GM10248 (cell line): ENCODE measurements at regions of chr6 and their contacts with region 1.

Region 1: GRCh38 chr6:70901326-70901725 is 55.5 kb downstream of the B3GAT2 start:
- DNase-seq: no peak
- CTCF ChIP-seq: no peak

Region 2: GRCh38 chr6:70586114-70586513 is 315.2 kb before region 1 on chr6:
- CTCF ChIA-PET with region 1: no interaction called
- POLR2A ChIA-PET with region 1: interaction called, 10 read pairs
- DNase-seq: peak; percentile 60
- CTCF ChIP-seq: no peak

Region 3: GRCh38 chr6:70725817-70726415 is 175.4 kb before region 1 on chr6:
- CTCF ChIA-PET with region 1: no interaction called
- POLR2A ChIA-PET with region 1: no interaction called
- DNase-seq: no peak
- CTCF ChIP-seq: no peak